Ovary (tissue), 10 donors: ENCODE measurements at regions of chr12 and their contacts with region 1.

Region 1: DNA sequence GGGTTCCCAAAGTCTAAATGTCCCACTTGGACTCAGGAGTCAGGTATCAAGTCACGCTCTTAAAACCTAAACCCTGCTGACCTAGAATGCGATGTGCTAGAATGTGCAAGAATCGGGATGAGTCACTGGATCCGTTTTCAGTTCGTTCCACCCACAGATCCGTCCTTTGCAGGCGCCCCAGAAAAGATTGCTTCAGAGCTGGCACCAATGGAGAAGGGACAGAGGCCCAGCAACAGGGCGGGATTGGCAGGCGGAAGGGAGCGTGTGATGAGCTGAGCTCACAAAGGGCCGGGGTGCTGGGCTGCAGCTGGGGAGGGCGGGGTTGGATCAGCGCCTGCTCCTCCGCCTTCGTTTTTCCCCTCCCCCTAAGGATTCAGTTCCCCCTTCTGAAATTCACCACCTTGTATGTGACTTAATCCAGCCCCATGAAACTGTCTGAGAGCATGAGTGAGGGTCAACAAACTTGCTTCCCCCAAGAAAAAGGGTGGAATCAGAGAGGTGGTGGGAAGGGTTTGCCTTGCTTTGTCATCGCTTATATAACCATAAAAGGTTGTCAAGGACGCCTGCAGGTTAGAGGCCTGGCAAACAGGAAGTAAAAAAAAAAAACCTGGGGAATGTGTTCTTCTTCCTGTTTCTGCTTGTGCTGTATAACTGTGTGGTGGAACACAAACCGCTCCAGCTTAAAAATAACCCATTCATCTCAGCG is 2.8 kb upstream of the UBC start:
- DNase-seq: peak; percentile 92 to 96 (median 95)
- H3K4me3 ChIP-seq: peak overlapping the region; percentile 30
- H3K27ac ChIP-seq: peak overlapping the region; percentile 89
- H3K4me1 ChIP-seq: peaks cover 6% of the 10 kb centered on the region
- H3K27me3 ChIP-seq: no peaks in the 10 kb centered on the region
- CTCF ChIP-seq: no peak
- EP300 ChIP-seq: peak; percentile 83
- POLR2A ChIP-seq: peak; percentile 62

Region 2: GRCh38 chr12:124036674-124037109 is 880.6 kb before region 1 on chr12:
- intact Hi-C with region 1: loop called in 2 of 4 experiments (anchors 10 kb)
- DNase-seq: peak in 4 of 5 donors; percentile 62 to 72 (median 66)
- H3K4me3 ChIP-seq: no peak overlapping the region
- H3K27ac ChIP-seq: no peak overlapping the region
- H3K4me1 ChIP-seq: no peaks in the 10 kb centered on the region
- H3K27me3 ChIP-seq: no peaks in the 10 kb centered on the region
- CTCF ChIP-seq: peak; percentile 85 to 89 (median 89)
- EP300 ChIP-seq: no peak
- POLR2A ChIP-seq: no peak

Region 3: GRCh38 chr12:124044809-124045321 is 872.4 kb before region 1 on chr12:
- intact Hi-C with region 1: loop called in 1 of 4 experiments (anchors 10 kb)
- DNase-seq: no peak
- H3K4me3 ChIP-seq: no peak overlapping the region
- H3K27ac ChIP-seq: no peak overlapping the region
- H3K4me1 ChIP-seq: no peaks in the 10 kb centered on the region
- H3K27me3 ChIP-seq: no peaks in the 10 kb centered on the region
- CTCF ChIP-seq: no peak
- EP300 ChIP-seq: no peak
- POLR2A ChIP-seq: no peak

Region 4: GRCh38 chr12:124939428-124940142 is 22.3 kb after region 1 on chr12:
- intact Hi-C with region 1: loop called in 1 of 4 experiments (anchors 2 kb)
- DNase-seq: peak; percentile 86 to 94 (median 93)
- H3K4me3 ChIP-seq: peak overlapping the region; percentile 53
- H3K27ac ChIP-seq: peak overlapping the region; percentile 90 to 91
- H3K4me1 ChIP-seq: peaks cover 3% of the 10 kb centered on the region
- H3K27me3 ChIP-seq: no peaks in the 10 kb centered on the region
- CTCF ChIP-seq: peak in 1 of 3 donors; percentile 26
- EP300 ChIP-seq: no peak
- POLR2A ChIP-seq: peak; percentile 41